ENCODE measurements at regions of chr16 and their contacts with region 1.

Region 1: GRCh38 chr16:31458844-31459721 is at the start of gene ARMC5:
- ATAC-seq: peak; percentile 70 to 85 (median 80)
- H3K4me3 ChIP-seq: peak within 1 kb of the TSS; percentile 67 to 87 (median 75)
- H3K27ac ChIP-seq: peak within 1 kb of the TSS; percentile 100
- H3K4me1 ChIP-seq: peaks cover 36 to 39% of the 10 kb centered on the region in 2 donors
- total RNA-seq, gene ARMC5: 7.4 to 12.3 (median 9.4) TPM

Region 2: GRCh38 chr16:30621765-30622164 is 837.3 kb before region 1 on chr16:
- in situ Hi-C with region 1: no loop called
- ATAC-seq: no peak
- H3K4me3 ChIP-seq: no peak overlapping the region
- H3K27ac ChIP-seq: no peak overlapping the region
- H3K4me1 ChIP-seq: peaks cover 6 to 24% of the 10 kb centered on the region in 2 donors

Region 3: DNA sequence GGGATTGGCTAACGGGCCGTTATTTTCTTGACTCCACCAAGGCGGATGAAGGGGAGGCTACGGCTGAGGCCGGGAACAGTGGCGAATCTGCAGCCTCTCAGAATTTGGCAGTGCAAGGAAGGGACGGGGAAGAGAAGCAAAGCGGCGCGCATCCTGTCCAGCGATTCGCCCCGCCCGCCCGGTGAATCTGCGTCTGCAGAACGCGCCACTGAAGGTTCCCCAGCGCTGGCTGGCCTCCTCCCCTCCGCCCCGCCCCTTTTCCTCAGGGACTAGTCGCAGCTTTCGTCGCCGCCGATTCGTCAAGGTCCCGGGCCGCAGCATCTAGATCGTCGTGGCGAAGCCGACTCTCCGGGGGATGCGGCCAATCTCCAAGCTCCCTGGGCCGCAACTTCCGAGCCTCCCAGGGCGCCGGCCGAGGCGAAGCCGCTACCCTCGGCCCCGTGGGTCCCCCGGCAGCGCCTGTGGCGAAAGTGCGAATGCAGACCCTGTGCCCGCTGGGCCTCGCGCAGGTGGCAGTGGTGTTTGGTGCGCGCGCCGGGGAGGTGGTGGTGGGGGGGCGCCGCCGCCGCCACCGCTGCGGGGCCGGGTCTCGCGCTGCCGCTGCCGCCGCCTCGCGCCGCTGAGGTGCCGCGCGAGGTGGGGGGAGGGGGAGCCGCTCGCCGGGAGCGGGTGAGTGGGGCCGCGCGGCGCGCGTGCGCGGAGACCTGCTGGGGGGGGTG is 501.5 kb before region 1 on chr16 and contains the start of gene SETD1A:
- in situ Hi-C with region 1: loop called in 2 of 9 experiments (anchors 25 kb)
- ATAC-seq: peak; percentile 76 to 86 (median 80)
- H3K4me3 ChIP-seq: peak within 1 kb of the TSS; percentile 77 to 99 (median 87)
- H3K27ac ChIP-seq: peak within 1 kb of the TSS; percentile 99 to 100
- H3K4me1 ChIP-seq: peaks cover 6 to 12% of the 10 kb centered on the region in 2 donors
- total RNA-seq, gene SETD1A: 3.5 to 17.0 (median 6.6) TPM